Right ventricle myocardium inferior (tissue), 1 donor: ENCODE measurements at regions of chr7 and their contacts with region 1.

Region 1: GRCh38 chr7:134891262-134891695 is 95.0 kb upstream of the AGBL3 start:
- DNase-seq: peak; percentile 82
- ATAC-seq: peak; percentile 93

Region 2: GRCh38 chr7:134778941-134779740 is 112.1 kb before region 1 on chr7 and contains the start of gene CALD1:
- intact Hi-C with region 1: loop called (anchors 5 kb)
- DNase-seq: peak; percentile 72
- ATAC-seq: peak; percentile 90
- total RNA-seq, gene CALD1: 99.1 TPM

Region 3: DNA sequence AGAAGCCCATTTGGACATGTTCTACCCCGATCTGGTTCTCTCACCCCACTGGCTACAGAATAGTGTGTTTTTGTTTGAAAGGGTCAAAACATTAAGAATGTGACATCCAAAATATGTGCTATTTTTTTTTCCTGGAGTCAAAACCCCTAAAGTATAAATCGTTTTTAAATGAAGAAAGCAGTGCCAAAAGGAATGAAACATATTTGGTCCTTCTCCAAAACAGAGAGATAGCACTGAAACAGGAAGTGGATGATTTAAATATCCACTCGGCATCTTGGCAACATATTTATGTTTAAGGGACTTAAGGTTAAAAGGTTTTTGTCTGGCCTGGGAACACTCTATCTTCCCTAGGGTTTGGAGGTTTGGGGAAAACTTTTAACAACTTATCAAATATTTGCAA is 79.5 kb before region 1 on chr7:
- intact Hi-C with region 1: no loop called
- DNase-seq: no peak
- ATAC-seq: peak; percentile 40

Region 4: DNA sequence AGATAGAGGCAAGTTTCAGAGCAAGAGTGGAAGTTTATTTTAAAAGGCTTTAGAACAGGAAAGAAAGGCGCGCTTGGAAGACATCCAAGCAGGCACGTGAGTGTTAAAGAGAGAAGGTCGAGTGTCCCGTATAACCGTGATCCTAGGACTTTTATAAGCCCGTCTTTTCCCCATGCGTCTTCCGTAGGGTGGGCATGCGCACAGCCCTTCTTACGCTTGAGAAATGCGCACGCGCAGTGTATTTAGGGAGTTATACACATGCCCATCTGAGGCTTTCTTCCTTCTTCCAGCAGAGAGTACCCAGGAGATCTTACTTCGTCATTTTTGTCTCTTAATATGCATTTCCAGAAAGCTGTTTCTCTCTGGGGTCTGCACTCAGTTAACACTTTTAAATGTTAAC is 59.4 kb before region 1 on chr7:
- intact Hi-C with region 1: no loop called
- DNase-seq: no peak
- ATAC-seq: peak; percentile 42

Region 5: DNA sequence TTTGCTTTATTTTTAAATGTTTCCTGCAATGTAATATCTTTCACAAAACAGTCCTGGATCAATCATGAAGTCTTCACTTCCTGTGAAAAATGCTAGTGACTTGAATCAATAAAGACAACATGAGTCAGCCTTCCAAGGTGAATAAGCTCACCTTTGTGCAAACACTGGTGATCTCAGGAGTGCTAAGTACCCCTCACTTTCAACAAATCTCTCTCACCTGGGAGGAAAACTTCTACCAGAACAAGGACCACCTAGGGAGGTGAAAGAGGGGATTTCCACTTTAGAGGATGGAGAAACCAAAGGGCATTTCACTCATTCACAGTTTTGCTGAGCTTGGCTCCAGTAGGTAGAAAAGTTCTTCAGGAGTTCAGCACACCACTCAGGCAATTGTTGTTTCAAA is 47.1 kb before region 1 on chr7:
- intact Hi-C with region 1: loop called (anchors 5 kb)
- DNase-seq: no peak
- ATAC-seq: no peak

Region 6: DNA sequence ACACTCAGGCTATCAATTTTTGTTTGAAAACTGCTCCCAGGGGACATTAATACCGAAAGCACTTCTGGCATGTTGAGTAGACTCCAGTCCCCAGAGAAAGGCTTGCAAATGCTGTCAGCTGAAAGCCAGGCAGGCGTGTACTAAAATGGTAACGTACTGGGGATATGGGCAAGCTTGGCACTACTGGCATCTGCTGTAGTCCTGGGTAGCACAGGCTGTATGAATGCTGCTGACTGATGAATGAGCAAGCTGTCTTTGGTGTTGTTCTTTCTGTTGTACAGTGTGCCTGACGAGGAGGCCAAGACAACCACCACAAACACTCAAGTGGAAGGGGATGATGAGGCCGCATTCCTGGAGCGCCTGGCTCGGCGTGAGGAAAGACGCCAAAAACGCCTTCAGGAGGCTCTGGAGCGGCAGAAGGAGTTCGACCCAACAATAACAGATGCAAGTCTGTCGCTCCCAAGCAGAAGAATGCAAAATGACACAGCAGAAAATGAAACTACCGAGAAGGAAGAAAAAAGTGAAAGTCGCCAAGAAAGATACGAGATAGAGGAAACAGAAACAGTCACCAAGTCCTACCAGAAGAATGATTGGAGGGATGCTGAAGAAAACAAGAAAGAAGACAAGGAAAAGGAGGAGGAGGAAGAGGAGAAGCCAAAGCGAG is 41.6 kb after region 1 on chr7:
- intact Hi-C with region 1: loop called (anchors 5 kb)
- DNase-seq: peak; percentile 69
- ATAC-seq: peak; percentile 75

Region 7: GRCh38 chr7:135012229-135012628 is 121.0 kb after region 1 on chr7:
- intact Hi-C with region 1: no loop called
- DNase-seq: no peak
- ATAC-seq: no peak